ENCODE measurements at regions of chr3 and their contacts with region 1.

Region 1: DNA sequence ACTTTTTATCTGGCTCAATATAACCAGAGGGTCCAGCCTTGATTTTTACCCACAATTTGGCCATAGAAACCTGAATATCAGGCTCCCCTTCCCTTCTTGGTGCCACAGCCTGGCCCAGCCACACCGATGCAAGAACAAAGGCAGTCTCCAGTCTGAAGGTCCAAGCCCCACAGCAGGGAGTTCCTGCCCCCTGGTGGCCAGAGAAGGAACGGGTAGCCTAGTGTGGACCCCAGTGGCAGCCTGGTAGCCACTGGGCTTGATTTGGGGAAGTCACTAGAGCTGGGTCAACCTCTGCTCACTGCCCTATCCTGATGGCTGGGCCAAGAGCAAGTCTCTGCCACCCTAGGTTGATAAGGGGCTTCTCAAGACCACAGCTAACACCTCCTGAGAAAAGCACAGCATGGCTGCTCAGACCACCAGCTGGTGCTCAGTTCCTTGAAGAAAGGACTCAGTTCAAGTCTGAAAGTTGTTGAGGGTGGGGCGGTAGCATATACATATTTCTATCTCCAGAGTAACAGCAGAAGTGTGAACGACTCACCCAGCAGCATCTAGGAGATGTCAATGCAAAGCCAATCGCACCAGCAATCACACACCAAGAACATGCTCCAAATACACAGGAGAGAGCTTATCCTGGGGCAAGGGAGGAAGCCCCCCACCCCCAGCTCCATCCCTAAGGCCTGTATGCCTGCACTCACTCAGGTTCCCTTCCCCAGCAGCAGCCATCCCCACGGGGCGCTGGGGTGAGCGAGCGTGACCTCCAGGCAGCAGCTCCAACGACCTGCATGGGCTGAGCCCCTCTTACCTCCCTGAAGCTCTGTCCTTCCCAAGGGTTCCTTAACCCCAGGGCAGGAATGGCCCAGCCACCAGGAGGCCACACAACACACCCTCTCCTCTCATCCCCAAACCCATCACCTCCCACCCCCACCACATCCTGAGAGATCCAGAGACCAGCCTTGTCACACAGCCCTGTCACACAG is 7.6 kb downstream of the PFKFB4 start:
- DNase-seq: peak; percentile 44
- H3K4me3 ChIP-seq: no peak overlapping the region
- H3K27ac ChIP-seq: no peak overlapping the region
- H3K4me1 ChIP-seq: peaks cover 1% of the 10 kb centered on the region
- H3K27me3 ChIP-seq: no peaks in the 10 kb centered on the region
- CTCF ChIP-seq: peak; percentile 94 to 95

Region 2: GRCh38 chr3:48194446-48195071 is 354.5 kb before region 1 on chr3:
- CTCF ChIA-PET with region 1: no interaction called
- dilution Hi-C with region 1: no loop called
- in situ Hi-C with region 1: no loop called
- intact Hi-C with region 1: loop called (anchors 2 kb)
- DNase-seq: peak; percentile 63
- H3K4me3 ChIP-seq: no peak overlapping the region
- H3K27ac ChIP-seq: no peak overlapping the region
- H3K4me1 ChIP-seq: peaks cover 2% of the 10 kb centered on the region
- H3K27me3 ChIP-seq: no peaks in the 10 kb centered on the region
- CTCF ChIP-seq: peak; percentile 88 to 97

Region 3: DNA sequence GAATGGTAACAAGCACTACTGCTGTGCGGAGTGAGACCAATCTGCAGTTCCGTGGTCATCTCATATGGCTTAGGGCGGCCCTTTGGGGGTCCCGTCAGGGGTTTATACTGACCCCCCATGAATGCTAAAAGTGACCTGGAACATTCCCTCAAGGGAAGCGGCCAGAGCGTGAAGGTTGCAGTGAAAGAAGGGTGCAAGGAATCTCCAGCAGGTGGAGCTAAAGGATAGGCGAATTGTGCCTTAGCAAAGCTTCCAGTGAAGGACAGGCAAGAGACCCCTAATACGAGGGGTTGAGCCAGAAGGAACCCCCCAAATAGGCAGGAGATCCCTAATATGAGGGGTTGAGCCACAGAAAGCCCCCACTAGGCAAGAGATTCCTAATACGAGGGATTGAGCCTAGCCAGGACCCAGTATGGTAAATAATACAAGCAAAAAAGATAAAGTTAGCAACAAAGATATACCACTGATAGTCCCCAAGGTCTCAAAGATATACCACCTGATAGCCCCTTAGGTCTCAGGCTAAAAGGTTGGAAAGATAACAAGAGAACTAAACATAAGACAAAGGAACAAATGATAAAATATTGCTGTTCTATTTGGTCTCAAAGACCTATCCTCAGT is 275.3 kb before region 1 on chr3:
- CTCF ChIA-PET with region 1: no interaction called
- dilution Hi-C with region 1: loop called (anchors 10 kb)
- in situ Hi-C with region 1: loop called in 1 of 2 experiments (anchors 25 kb)
- intact Hi-C with region 1: loop called (anchors 1 kb)
- DNase-seq: peak; percentile 34
- H3K4me3 ChIP-seq: no peak overlapping the region
- H3K27ac ChIP-seq: no peak overlapping the region
- H3K4me1 ChIP-seq: peaks cover 15% of the 10 kb centered on the region
- H3K27me3 ChIP-seq: no peaks in the 10 kb centered on the region
- CTCF ChIP-seq: peak; percentile 84 to 86

Region 4: GRCh38 chr3:48439820-48440589 is 109.0 kb before region 1 on chr3 and contains the starts of genes CCDC51 and TMA7:
- CTCF ChIA-PET with region 1: interaction called, 8 read pairs
- dilution Hi-C with region 1: no loop called
- in situ Hi-C with region 1: no loop called
- intact Hi-C with region 1: loop called (anchors 1 kb)
- DNase-seq: peak; percentile 97
- H3K4me3 ChIP-seq: peak within 1 kb of the TSS; percentile 64 to 97 (median 96)
- H3K27ac ChIP-seq: peak within 1 kb of the TSS; percentile 63
- H3K4me1 ChIP-seq: peaks cover 20% of the 10 kb centered on the region
- H3K27me3 ChIP-seq: no peaks in the 10 kb centered on the region
- CTCF ChIP-seq: no peak
- total RNA-seq, gene CCDC51: 25.6 to 27.3 TPM
- total RNA-seq, gene TMA7: 80.5 to 270 TPM

Region 5: GRCh38 chr3:48459773-48460516 is 89.1 kb before region 1 on chr3:
- CTCF ChIA-PET with region 1: interaction called, 4 read pairs
- dilution Hi-C with region 1: no loop called
- in situ Hi-C with region 1: loop called in 1 of 2 experiments (anchors 10 kb)
- intact Hi-C with region 1: loop called (anchors 1 kb)
- DNase-seq: no peak
- H3K4me3 ChIP-seq: no peak overlapping the region
- H3K27ac ChIP-seq: no peak overlapping the region
- H3K4me1 ChIP-seq: peaks cover 21% of the 10 kb centered on the region
- H3K27me3 ChIP-seq: no peaks in the 10 kb centered on the region
- CTCF ChIP-seq: no peak

Region 6: DNA sequence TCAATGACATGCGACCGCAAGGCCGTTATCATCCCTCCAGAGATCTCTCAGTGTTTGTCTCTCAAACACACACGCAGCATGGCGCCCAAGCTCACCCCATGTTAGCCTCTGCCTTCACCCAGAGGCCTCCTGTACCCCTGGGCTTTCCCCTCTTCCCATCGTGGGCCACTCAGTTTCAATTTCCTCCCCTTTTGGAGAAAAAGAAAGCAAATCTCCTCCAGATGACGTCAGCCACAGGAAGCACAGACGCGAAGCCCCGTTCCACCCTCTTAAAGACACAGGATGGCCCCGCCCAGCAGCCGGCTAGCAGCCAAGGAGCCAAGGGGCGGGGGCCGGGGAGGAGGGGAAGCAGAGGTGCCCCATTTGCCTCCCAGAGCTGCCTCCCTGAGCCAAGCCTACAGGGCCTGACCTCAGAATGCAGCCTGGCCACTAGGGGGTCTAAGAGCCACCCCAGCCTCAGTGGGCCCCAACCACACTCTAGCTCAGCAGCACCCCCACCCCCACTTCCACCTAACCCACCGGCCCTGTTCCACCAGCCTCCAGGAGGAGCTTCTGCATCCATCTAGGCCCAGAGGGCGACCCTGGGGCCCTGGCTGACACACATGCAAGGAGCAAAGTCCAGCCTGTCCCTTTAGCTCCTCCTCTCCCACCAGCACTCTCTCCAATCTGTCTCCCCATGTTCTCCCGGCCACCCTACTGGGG is 76.0 kb before region 1 on chr3:
- CTCF ChIA-PET with region 1: no interaction called
- dilution Hi-C with region 1: loop called (anchors 5 kb)
- in situ Hi-C with region 1: no loop called
- intact Hi-C with region 1: loop called (anchors 2 kb)
- DNase-seq: peak; percentile 89
- H3K4me3 ChIP-seq: peak overlapping the region; percentile 50 to 96 (median 76)
- H3K27ac ChIP-seq: peak overlapping the region; percentile 91
- H3K4me1 ChIP-seq: peaks cover 11% of the 10 kb centered on the region
- H3K27me3 ChIP-seq: no peaks in the 10 kb centered on the region
- CTCF ChIP-seq: peak in 1 of 2 donors; percentile 48

Region 7: DNA sequence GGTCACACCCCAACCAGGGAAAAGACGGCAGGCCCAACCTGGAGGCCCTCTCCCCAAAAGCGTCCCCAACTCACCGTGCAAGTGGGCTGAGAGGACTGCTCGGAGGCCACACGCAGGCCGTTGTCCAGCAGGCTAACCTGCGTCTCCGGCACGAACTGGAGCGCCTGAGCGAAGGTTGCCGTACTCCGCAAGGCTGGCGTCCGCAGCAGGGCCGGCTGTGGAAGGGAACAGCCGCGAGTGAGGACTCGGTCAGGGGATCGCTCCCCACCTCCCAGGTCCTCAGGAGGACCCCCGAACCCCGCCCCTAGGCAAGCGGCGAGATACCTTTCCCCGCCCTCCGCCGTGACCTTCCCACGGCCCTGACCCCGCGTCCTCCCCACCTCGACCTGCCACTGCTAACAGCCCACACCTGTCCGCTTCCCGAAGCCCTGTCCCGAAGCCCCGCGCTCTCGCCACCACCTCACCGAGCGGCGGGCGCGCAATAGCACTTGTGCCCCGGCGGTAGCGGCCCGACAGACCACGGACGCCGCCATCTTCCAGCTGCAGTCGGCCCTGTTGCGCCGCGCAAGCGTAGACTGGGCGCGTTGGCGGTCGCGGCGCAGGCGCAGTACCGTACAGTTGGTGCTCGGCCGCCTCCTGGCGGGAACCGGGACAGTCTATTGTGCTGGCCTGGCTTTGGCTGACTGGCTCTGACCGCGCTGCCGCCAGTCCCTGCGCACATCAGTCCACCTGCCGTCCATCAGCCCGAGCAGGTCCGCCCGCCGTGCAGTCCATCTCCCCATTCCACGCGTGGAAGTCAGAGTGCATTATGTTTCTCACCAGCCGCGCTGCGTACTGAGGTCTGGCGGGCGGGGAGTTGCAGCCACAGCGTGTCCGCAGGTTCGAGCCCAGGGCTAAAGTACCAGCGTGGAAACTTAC is 60.3 kb after region 1 on chr3 and contains the start of gene UQCRC1:
- CTCF ChIA-PET with region 1: no interaction called
- dilution Hi-C with region 1: no loop called
- in situ Hi-C with region 1: no loop called
- intact Hi-C with region 1: no loop called
- DNase-seq: peak; percentile 89
- H3K4me3 ChIP-seq: peak within 1 kb of the TSS; percentile 46 to 99 (median 87)
- H3K27ac ChIP-seq: peak within 1 kb of the TSS; percentile 60
- H3K4me1 ChIP-seq: peaks cover 19% of the 10 kb centered on the region
- H3K27me3 ChIP-seq: no peaks in the 10 kb centered on the region
- CTCF ChIP-seq: peak; percentile 24 to 69
- total RNA-seq, gene UQCRC1: 321 to 490 TPM